ENCODE measurements at regions of chr7 and their contacts with region 1.

Region 1: DNA sequence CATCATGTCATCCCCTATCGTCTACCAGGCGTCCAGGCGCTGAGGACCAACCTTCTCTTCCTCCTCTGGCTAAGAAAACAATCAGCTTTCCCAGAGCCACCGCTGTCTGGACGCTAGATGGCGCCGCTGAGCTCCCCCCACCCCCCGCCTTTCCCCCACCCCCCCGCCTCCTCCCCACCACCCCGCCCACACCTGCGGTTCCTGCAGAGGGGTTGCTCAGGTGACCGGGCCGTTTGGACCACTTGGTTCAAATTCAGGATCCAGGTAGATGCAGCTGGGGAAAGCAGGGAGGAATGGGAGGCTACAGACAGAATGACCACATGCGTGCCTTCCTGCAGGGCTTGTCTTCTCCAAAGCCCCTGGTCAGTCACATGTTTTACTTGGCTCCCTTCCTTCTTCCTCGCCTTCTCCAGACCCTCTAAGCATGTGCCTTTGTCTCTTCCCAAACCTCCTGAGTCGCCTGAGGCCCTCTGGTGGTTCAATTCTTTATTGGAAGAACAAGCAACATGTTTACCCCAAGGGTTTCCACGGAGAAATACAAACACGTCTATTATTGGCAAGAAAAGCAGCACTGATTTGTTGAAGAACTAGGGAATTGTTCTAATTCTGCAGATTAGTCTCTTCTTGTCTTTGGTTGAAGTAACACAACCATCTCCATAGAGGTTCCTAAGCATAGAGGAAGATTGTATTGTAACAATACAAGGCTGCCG is 24.7 kb downstream of the AOC1 start:
- DNase-seq: peak; percentile 87
- ATAC-seq: peak; percentile 89
- H3K4me3 ChIP-seq: no peak overlapping the region
- H3K27ac ChIP-seq: no peak overlapping the region
- H3K4me1 ChIP-seq: peaks cover 0 to 20% of the 10 kb centered on the region in 2 experiments; a peak in 3 of 4 replicates
- H3K27me3 ChIP-seq: peaks cover 4% of the 10 kb centered on the region; the same call in 1 of the 2 replicates
- CTCF ChIP-seq: peak; percentile 72 to 77 (median 73); a peak in 5 of 6 replicates
- POLR2A ChIP-seq: no peak
- RAD21 ChIP-seq: peak; percentile 56

Region 2: GRCh38 chr7:150448789-150449147 is 428.2 kb before region 1 on chr7:
- CTCF ChIA-PET with region 1: interaction called, 8 read pairs
- POLR2A ChIA-PET with region 1: no interaction called
- RAD21 ChIA-PET with region 1: no interaction called
- intact Hi-C with region 1: loop called (anchors 10 kb)
- DNase-seq: peak; percentile 48
- ATAC-seq: peak; percentile 95
- H3K4me3 ChIP-seq: no peak overlapping the region
- H3K27ac ChIP-seq: no peak overlapping the region
- H3K4me1 ChIP-seq: no peaks in the 10 kb centered on the region
- H3K27me3 ChIP-seq: no peaks in the 10 kb centered on the region
- CTCF ChIP-seq: peak; percentile 73 to 96 (median 90)
- POLR2A ChIP-seq: no peak
- RAD21 ChIP-seq: peak; percentile 89

Region 3: DNA sequence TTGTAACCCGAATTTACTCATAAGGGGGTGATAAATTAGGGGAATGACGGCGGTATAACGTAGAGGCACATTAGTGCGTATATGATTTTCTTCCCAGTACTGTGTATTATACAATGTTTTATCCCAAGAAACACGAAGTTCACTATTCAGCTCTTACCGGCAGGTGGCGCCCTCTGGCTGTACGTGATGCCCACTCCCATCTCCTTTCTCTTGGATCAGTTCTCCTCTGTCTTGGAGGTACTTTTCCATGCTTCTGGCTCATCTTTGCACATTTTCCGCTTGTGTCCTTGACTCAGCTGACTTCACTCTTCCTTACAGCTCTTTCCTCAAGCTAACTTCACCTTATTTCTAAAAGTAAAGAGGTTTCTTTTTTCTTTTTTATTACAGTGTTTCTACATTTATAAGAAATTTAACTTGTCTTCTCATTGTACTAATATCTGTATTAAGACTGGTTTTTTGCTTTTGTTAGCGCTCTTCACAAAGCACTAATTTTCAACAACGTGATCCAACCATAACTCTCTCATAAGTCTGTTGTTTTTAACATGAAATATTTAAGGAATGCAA is 98.2 kb before region 1 on chr7:
- CTCF ChIA-PET with region 1: interaction called, 6 read pairs
- POLR2A ChIA-PET with region 1: no interaction called
- RAD21 ChIA-PET with region 1: no interaction called
- intact Hi-C with region 1: loop called (anchors 5 kb)
- DNase-seq: peak; percentile 68
- ATAC-seq: peak; percentile 95
- H3K4me3 ChIP-seq: peak overlapping the region in 1 of 2 experiments; percentile 34; a peak in 1 of 4 replicates
- H3K27ac ChIP-seq: no peak overlapping the region
- H3K4me1 ChIP-seq: peaks cover 0 to 4% of the 10 kb centered on the region in 2 experiments; a peak in 2 of 4 replicates
- H3K27me3 ChIP-seq: 0 out of 2 replicates have a peak, but pooled peaks cover 8% of the 10 kb centered on the region
- CTCF ChIP-seq: peak; percentile 77 to 93 (median 93)
- POLR2A ChIP-seq: no peak
- RAD21 ChIP-seq: peak; percentile 87

Region 4: DNA sequence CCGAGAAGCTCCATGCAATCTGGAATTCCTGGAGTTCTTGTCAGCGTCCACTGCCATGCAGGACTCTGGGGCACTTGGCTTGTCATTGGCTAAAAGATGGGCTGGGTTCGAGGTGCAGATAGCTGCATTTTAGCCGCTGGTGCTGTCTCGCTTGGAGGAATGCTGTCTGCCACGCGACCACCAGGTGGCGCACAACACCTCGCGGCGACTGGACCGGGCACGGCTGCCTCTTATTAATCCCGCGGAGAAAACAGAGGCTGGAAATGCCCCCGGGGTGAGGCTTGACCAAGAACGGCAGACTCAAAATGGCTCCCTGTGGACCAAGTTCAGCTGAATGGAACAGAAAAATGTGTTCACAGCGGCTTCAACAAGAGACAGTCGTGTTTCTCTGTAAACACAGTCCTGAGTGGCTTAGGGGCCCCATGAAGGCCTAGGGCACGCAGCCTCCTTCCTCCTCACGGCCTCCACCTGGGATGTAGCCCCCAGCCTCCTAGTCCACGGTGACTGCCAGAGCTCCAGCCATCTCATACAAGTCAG is 21.6 kb after region 1 on chr7:
- CTCF ChIA-PET with region 1: interaction called, 10 read pairs
- POLR2A ChIA-PET with region 1: no interaction called
- RAD21 ChIA-PET with region 1: no interaction called
- intact Hi-C with region 1: no loop called
- DNase-seq: peak; percentile 51
- ATAC-seq: peak; percentile 95
- H3K4me3 ChIP-seq: no peak overlapping the region
- H3K27ac ChIP-seq: no peak overlapping the region
- H3K4me1 ChIP-seq: peaks cover 0 to 12% of the 10 kb centered on the region in 2 experiments; a peak in 2 of 4 replicates
- H3K27me3 ChIP-seq: no peaks in the 10 kb centered on the region
- CTCF ChIP-seq: peak; percentile 89 to 95 (median 89)
- POLR2A ChIP-seq: no peak
- RAD21 ChIP-seq: peak; percentile 89

Region 5: GRCh38 chr7:151166629-151167196 is 289.7 kb after region 1 on chr7:
- CTCF ChIA-PET with region 1: no interaction called
- POLR2A ChIA-PET with region 1: no interaction called
- RAD21 ChIA-PET with region 1: interaction called in 1 of 2 experiments, 10 read pairs
- intact Hi-C with region 1: no loop called
- DNase-seq: no peak
- ATAC-seq: no peak
- H3K4me3 ChIP-seq: peak overlapping the region; percentile 49 to 68
- H3K27ac ChIP-seq: no peak overlapping the region
- H3K4me1 ChIP-seq: peaks cover 0 to 12% of the 10 kb centered on the region in 2 experiments; a peak in 2 of 4 replicates
- H3K27me3 ChIP-seq: no peaks in the 10 kb centered on the region
- CTCF ChIP-seq: no peak
- POLR2A ChIP-seq: no peak
- RAD21 ChIP-seq: no peak

Measured in HCT116 (cell line).